Activated T-helper 2 cell treated with anti-CD3 and anti-CD28 coated beads, Interferon-gamma antibody, Interleukin-2, Interleukin-4, amounts not matched to agents 10 μg/mL and 5 μg/mL and 100 μg/mL, durations not matched to agents 14 hours and 24 hours and 36 hours (primary cell): ENCODE measurements at regions of chr3 and their contacts with region 1.

Region 1: GRCh38 chr3:123328851-123329635 is 119.8 kb downstream of the ADCY5 start:
- DNase-seq: peak; percentile 62
- H3K4me3 Mint-ChIP-seq: no peak overlapping the region
- H3K27ac Mint-ChIP-seq: no peak overlapping the region
- H3K4me1 Mint-ChIP-seq: no peaks in the 10 kb centered on the region
- H3K27me3 Mint-ChIP-seq: peaks cover 2% of the 10 kb centered on the region

Region 2: DNA sequence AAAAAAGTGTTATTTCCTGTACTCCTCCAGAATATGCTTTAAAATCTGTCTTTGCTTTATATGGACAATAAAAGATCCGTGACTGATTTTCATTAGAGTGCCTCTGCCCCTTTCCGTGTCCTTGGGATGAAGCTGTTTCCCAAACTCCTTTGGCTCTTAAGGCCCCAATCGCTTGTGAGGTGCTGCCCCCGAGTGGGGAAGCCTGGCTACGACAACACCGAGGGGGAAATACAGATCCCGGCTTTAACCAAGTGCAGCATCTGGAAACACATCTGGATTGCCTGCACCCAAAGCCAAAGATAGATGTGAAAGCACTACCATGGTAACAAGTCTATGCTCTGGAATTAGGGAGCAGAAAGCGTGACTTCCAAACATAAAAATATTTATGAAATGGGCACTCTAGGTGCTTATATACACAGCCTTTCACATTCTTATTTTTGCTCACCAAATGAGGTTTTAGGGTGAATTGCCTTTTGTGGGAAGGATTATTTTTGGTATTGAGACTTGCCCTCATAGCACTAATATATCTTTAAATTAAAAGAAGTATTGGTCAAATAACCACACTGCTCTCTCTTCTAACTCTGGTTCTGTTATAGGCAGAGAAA is 160.5 kb after region 1 on chr3:
- intact Hi-C with region 1: loop called (anchors 2 kb)
- DNase-seq: no peak
- H3K4me3 Mint-ChIP-seq: no peak overlapping the region
- H3K27ac Mint-ChIP-seq: no peak overlapping the region
- H3K4me1 Mint-ChIP-seq: no peaks in the 10 kb centered on the region
- H3K27me3 Mint-ChIP-seq: no peaks in the 10 kb centered on the region

Region 3: GRCh38 chr3:123559040-123559861 is 230.2 kb after region 1 on chr3:
- intact Hi-C with region 1: loop called (anchors 1 kb)
- DNase-seq: no peak
- H3K4me3 Mint-ChIP-seq: no peak overlapping the region
- H3K27ac Mint-ChIP-seq: no peak overlapping the region
- H3K4me1 Mint-ChIP-seq: peaks cover 5% of the 10 kb centered on the region
- H3K27me3 Mint-ChIP-seq: no peaks in the 10 kb centered on the region